Heart right ventricle (tissue), 16 donors: ENCODE measurements at regions of chr17 and their contacts with region 1.

Region 1: GRCh38 chr17:71217769-71218168 is 903.1 kb upstream of the SOX9 start:
- DNase-seq: no peak
- ATAC-seq: no peak
- H3K4me3 ChIP-seq: no peak overlapping the region
- H3K27ac ChIP-seq: no peak overlapping the region
- H3K4me1 ChIP-seq: no peaks in the 10 kb centered on the region
- H3K27me3 ChIP-seq: no peaks in the 10 kb centered on the region
- CTCF ChIP-seq: no peak

Region 2: GRCh38 chr17:71188811-71189492 is 28.8 kb before region 1 on chr17:
- intact Hi-C with region 1: no loop called
- DNase-seq: no peak
- ATAC-seq: no peak
- H3K4me3 ChIP-seq: no peak overlapping the region
- H3K27ac ChIP-seq: no peak overlapping the region
- H3K4me1 ChIP-seq: no peaks in the 10 kb centered on the region
- H3K27me3 ChIP-seq: no peaks in the 10 kb centered on the region
- CTCF ChIP-seq: no peak

Region 3: GRCh38 chr17:71260366-71260940 is 42.7 kb after region 1 on chr17:
- intact Hi-C with region 1: loop called in 2 of 10 experiments (anchors 2 to 5 kb)
- DNase-seq: no peak
- ATAC-seq: no peak
- H3K4me3 ChIP-seq: no peak overlapping the region
- H3K27ac ChIP-seq: no peak overlapping the region
- H3K4me1 ChIP-seq: no peaks in the 10 kb centered on the region
- H3K27me3 ChIP-seq: no peaks in the 10 kb centered on the region
- CTCF ChIP-seq: no peak

Region 4: GRCh38 chr17:71273441-71273840 is 55.7 kb after region 1 on chr17:
- intact Hi-C with region 1: no loop called
- DNase-seq: no peak
- ATAC-seq: no peak
- H3K4me3 ChIP-seq: no peak overlapping the region
- H3K27ac ChIP-seq: no peak overlapping the region
- H3K4me1 ChIP-seq: no peaks in the 10 kb centered on the region
- H3K27me3 ChIP-seq: no peaks in the 10 kb centered on the region
- CTCF ChIP-seq: no peak